ENCODE measurements at regions of chr1 and their contacts with region 1.

Region 1: GRCh38 chr1:15847100-15847892 is at the start of gene SPEN:
- DNase-seq: peak; percentile 86

Region 2: GRCh38 chr1:15799937-15800835 is 47.1 kb before region 1 on chr1:
- CTCF ChIA-PET with region 1: no interaction called
- POLR2A ChIA-PET with region 1: interaction called, 27 read pairs
- DNase-seq: peak; percentile 37

Region 3: GRCh38 chr1:15820478-15820877 is 26.8 kb before region 1 on chr1:
- CTCF ChIA-PET with region 1: interaction called, 3 read pairs
- POLR2A ChIA-PET with region 1: interaction called, 13 read pairs
- DNase-seq: no peak

Region 4: GRCh38 chr1:15866721-15867201 is 19.5 kb after region 1 on chr1:
- CTCF ChIA-PET with region 1: no interaction called
- POLR2A ChIA-PET with region 1: interaction called, 10 read pairs
- DNase-seq: no peak

Region 5: GRCh38 chr1:15876357-15877055 is 29.2 kb after region 1 on chr1:
- CTCF ChIA-PET with region 1: interaction called, 7 read pairs
- POLR2A ChIA-PET with region 1: interaction called, 15 read pairs
- DNase-seq: peak; percentile 76